Caco-2 (cell line): ENCODE measurements at regions of chr17 and their contacts with region 1.

Region 1: DNA sequence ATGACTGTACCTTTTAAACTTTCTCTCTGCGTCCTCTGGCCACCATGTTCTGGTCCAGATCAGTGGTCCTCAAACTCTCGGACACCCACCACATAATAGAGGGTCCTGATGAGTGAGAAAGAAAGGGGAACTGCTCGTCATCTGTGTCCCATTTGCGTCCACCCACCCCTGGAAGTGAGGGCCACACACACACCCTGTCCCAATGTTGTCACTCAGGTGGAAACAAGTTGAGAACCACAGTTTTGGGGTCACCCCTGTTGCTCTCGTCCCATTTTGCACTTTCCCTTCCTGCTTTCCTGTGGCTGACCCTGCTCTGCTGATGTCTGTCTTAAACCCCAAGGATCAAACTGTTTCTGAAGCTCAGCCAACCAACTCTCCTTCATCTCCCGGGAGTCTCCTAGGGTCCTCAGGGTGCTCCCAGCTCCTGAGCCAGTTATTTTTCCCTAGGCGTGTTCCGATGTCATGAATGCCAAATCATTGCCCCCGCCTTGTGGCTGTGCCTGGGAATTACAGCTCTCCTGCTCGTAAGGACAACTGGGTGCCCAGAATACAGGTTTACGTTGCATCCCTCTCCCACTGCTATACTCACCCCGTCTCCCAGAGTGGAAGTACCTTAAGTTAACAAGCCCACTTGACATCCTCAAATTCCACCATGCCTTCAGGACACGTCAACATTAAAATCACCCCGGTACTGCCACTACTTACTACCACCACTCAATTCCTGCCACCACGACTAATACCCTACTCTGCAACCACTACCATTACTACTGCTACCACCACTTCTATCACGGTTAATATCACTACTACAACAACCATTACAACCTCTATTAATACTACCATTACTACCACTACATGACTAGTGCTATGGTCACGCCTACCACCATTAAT is 26.0 kb upstream of the HNF1B start:
- DNase-seq: peak; percentile 79 to 83
- H3K4me3 ChIP-seq: no peak overlapping the region
- H3K4me3 Mint-ChIP-seq: no peak overlapping the region
- H3K27ac Mint-ChIP-seq: peak overlapping the region; percentile 4
- H3K4me1 ChIP-seq: no peaks in the 10 kb centered on the region
- H3K4me1 Mint-ChIP-seq: peaks cover 11% of the 10 kb centered on the region
- H3K27me3 ChIP-seq: no peaks in the 10 kb centered on the region
- H3K27me3 Mint-ChIP-seq: no peaks in the 10 kb centered on the region
- CTCF ChIP-seq: peak; percentile 81 to 89

Region 2: DNA sequence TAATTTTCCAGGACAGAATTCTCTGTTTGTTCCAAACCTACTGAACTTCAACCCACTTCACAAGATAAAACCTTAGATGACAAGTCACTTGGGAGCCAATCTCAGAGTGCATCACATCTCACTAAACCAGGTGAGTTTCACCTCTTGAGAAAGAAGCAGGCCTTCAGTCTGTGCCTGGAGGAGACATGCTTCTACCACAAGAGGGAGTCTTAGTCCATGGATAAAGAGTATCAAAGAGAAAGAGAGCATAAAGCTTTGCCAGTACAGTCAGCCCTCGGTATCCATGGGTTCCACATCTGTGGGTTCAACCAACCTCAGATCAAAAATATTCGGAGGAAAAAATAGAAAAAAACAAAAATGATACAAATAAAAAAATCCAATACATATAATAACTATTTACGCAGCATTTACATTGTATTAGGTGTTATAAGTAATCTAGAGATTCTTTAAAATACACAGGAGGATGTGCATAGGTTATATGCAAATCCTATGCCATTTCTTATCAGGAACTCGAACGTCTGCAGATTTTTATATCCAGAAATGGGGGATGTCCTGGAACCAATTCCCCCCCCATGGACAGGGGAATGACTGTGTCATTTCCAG is 243.5 kb before region 1 on chr17:
- CTCF ChIA-PET with region 1: interaction called, 4 read pairs
- POLR2A ChIA-PET with region 1: no interaction called
- intact Hi-C with region 1: loop called (anchors 1 kb)
- DNase-seq: peak; percentile 52 to 70
- H3K4me3 ChIP-seq: no peak overlapping the region
- H3K4me3 Mint-ChIP-seq: no peak overlapping the region
- H3K27ac Mint-ChIP-seq: no peak overlapping the region
- H3K4me1 ChIP-seq: no peaks in the 10 kb centered on the region
- H3K4me1 Mint-ChIP-seq: no peaks in the 10 kb centered on the region
- H3K27me3 ChIP-seq: no peaks in the 10 kb centered on the region
- H3K27me3 Mint-ChIP-seq: no peaks in the 10 kb centered on the region
- CTCF ChIP-seq: peak; percentile 81 to 87

Region 3: GRCh38 chr17:37650419-37651003 is 120.4 kb before region 1 on chr17:
- CTCF ChIA-PET with region 1: interaction called, 12 read pairs
- POLR2A ChIA-PET with region 1: no interaction called
- intact Hi-C with region 1: loop called (anchors 1 kb)
- DNase-seq: peak; percentile 64 to 66
- H3K4me3 ChIP-seq: no peak overlapping the region
- H3K4me3 Mint-ChIP-seq: no peak overlapping the region
- H3K27ac Mint-ChIP-seq: no peak overlapping the region
- H3K4me1 ChIP-seq: peaks cover 13% of the 10 kb centered on the region
- H3K4me1 Mint-ChIP-seq: peaks cover 14% of the 10 kb centered on the region
- H3K27me3 ChIP-seq: no peaks in the 10 kb centered on the region
- H3K27me3 Mint-ChIP-seq: no peaks in the 10 kb centered on the region
- CTCF ChIP-seq: peak; percentile 70 to 71

Region 4: DNA sequence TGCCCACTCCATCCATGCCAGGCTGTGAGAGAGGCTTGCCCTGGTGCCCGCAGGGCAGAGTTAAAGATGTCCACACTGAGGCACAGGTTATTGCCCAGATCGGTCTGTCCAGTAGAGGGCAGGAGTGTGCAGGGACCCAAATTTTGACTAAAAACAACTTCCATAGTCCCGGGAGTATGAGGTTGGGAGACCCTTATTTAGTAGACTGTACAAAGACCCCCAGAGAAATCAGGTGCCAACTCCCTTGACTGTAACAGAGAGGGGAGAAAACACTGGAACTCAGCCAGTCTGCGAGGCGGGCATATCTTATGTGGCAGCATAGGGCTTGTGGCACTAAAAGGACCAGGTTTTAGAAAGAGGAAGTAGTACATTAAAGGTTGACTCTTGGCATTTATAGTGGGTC is 69.4 kb before region 1 on chr17:
- CTCF ChIA-PET with region 1: interaction called, 7 read pairs
- POLR2A ChIA-PET with region 1: no interaction called
- intact Hi-C with region 1: loop called (anchors 2 kb)
- DNase-seq: peak in 1 of 2 experiments; percentile 58
- H3K4me3 ChIP-seq: no peak overlapping the region
- H3K4me3 Mint-ChIP-seq: no peak overlapping the region
- H3K27ac Mint-ChIP-seq: peak overlapping the region; percentile 84
- H3K4me1 ChIP-seq: peaks cover 12% of the 10 kb centered on the region
- H3K4me1 Mint-ChIP-seq: peaks cover 43% of the 10 kb centered on the region
- H3K27me3 ChIP-seq: no peaks in the 10 kb centered on the region
- H3K27me3 Mint-ChIP-seq: no peaks in the 10 kb centered on the region
- CTCF ChIP-seq: peak; percentile 64 to 79

Region 5: GRCh38 chr17:37744961-37745800 is 25.7 kb before region 1 on chr17 and contains the start of gene HNF1B:
- CTCF ChIA-PET with region 1: interaction called, 29 read pairs
- POLR2A ChIA-PET with region 1: interaction called, 10 read pairs
- intact Hi-C with region 1: loop called (anchors 2 kb)
- DNase-seq: peak; percentile 87 to 88
- H3K4me3 ChIP-seq: peak within 1 kb of the TSS; percentile 64
- H3K4me3 Mint-ChIP-seq: peak within 1 kb of the TSS; percentile 100
- H3K27ac Mint-ChIP-seq: peak within 1 kb of the TSS; percentile 100
- H3K4me1 ChIP-seq: peaks cover 21% of the 10 kb centered on the region
- H3K4me1 Mint-ChIP-seq: peaks cover 23% of the 10 kb centered on the region
- H3K27me3 ChIP-seq: no peaks in the 10 kb centered on the region
- H3K27me3 Mint-ChIP-seq: no peaks in the 10 kb centered on the region
- CTCF ChIP-seq: peak in 1 of 2 experiments; percentile 17
- total RNA-seq, gene HNF1B: 36.9 TPM in 2 replicates